ENCODE measurements at regions of chr13 and their contacts with region 1.

Region 1: DNA sequence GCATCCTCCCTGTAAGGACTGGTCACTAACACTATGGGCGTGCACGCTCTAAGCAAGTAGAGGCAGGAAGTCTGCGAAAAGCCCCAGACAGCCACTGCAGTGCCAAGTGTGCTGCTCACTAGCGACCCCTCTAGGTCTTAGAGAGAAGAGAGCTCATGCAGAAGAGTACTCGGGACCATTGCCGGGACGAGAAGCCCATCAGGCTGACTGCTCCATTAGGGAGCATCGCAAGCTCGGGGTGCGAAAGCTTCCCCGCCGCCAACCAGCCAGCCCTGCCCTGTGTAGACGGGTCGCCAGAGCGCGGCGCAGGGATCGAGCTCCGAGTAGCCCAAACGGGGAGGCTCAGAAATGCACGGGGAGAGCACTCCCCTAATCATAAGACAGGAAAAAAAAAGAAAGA is 16.6 kb downstream of the POU4F1 start:
- DNase-seq: peak in 1 of 2 experiments; percentile 79
- H3K4me3 ChIP-seq: peak overlapping the region in 1 of 4 experiments; percentile 41; a peak in 2 of 8 replicates
- H3K27ac ChIP-seq: no peak overlapping the region
- H3K4me1 ChIP-seq: peaks cover 0 to 7% (median 2%) of the 10 kb centered on the region in 4 experiments; a peak in 3 of 7 replicates
- H3K27me3 ChIP-seq: peaks cover 14 to 40% (median 26%) of the 10 kb centered on the region in 4 experiments
- CTCF ChIP-seq: peak; percentile 84 to 95 (median 85)
- EP300 ChIP-seq: no peak
- POLR2A ChIP-seq: no peak
- RAD21 ChIP-seq: peak; percentile 85 to 87

Region 2: DNA sequence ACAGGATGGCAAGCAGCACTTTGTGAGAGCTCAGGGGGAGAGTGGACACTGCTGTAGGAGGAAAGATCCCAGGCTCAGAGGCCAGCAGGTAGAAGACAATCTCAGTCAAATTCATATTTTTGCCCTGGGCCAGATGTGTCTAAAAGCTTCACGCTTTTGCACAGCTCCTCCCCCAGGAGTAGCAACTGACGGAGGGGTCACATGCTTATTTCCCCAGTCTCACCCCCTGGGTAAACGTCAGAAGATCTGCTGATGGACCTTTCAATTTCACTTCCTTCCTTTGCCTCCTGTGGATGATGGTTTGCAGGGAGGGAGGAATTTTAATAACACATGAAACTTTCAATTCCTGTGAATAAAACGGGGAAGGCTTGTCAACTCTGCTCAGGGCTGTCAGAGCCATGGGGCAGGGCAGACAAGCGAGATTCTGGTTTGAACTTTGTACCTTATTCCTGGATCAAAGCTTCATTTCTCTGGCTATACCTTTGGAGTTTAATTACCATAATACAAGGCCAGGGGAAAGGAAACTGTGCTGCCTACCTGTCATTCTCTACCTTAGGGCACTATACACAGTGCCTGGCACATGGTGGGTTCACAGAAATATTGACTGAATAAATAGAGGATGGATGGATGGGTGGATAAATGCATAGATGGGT is 24.3 kb before region 1 on chr13:
- CTCF ChIA-PET with region 1: interaction called, 10 read pairs
- POLR2A ChIA-PET with region 1: no interaction called
- DNase-seq: no peak
- H3K4me3 ChIP-seq: no peak overlapping the region
- H3K27ac ChIP-seq: no peak overlapping the region
- H3K4me1 ChIP-seq: no peaks in the 10 kb centered on the region
- H3K27me3 ChIP-seq: no peaks in the 10 kb centered on the region
- CTCF ChIP-seq: no peak
- EP300 ChIP-seq: no peak
- POLR2A ChIP-seq: no peak
- RAD21 ChIP-seq: no peak

Region 3: GRCh38 chr13:78576261-78576660 is 10.4 kb before region 1 on chr13:
- CTCF ChIA-PET with region 1: interaction called, 14 read pairs
- POLR2A ChIA-PET with region 1: no interaction called
- DNase-seq: no peak
- H3K4me3 ChIP-seq: no peak overlapping the region
- H3K27ac ChIP-seq: no peak overlapping the region
- H3K4me1 ChIP-seq: no peaks in the 10 kb centered on the region
- H3K27me3 ChIP-seq: no peaks in the 10 kb centered on the region
- CTCF ChIP-seq: no peak
- EP300 ChIP-seq: no peak
- POLR2A ChIP-seq: no peak
- RAD21 ChIP-seq: no peak

Region 4: GRCh38 chr13:78609464-78610205 is 22.9 kb after region 1 on chr13:
- CTCF ChIA-PET with region 1: interaction called, 12 read pairs
- POLR2A ChIA-PET with region 1: interaction called, 4 read pairs
- DNase-seq: peak in 1 of 2 experiments; percentile 72
- H3K4me3 ChIP-seq: peak overlapping the region; percentile 35 to 63 (median 42); a peak in 7 of 8 replicates
- H3K27ac ChIP-seq: no peak overlapping the region
- H3K4me1 ChIP-seq: peaks cover 7 to 33% (median 14%) of the 10 kb centered on the region in 4 experiments
- H3K27me3 ChIP-seq: peaks cover 55 to 69% (median 67%) of the 10 kb centered on the region in 4 experiments
- CTCF ChIP-seq: no peak
- EP300 ChIP-seq: no peak
- POLR2A ChIP-seq: no peak
- RAD21 ChIP-seq: 0 out of 4 replicates have a peak, but pooled peaks of 1 of the 2 experiments have one; percentile 1